Activated CD4-positive, alpha-beta T cell treated with anti-CD3 and anti-CD28 coated beads, Interleukin-2, amount 10 ng/mL, durations not matched to agents 24 days and 14 days (primary cell): ENCODE measurements at regions of chr3 and their contacts with region 1.

Region 1: GRCh38 chr3:177777699-177778098 is 580.4 kb upstream of the TBL1XR1 start:
- DNase-seq: peak; percentile 76
- H3K4me3 Mint-ChIP-seq: no peak overlapping the region
- H3K27ac Mint-ChIP-seq: no peak overlapping the region
- H3K4me1 Mint-ChIP-seq: peaks cover 10% of the 10 kb centered on the region
- H3K27me3 Mint-ChIP-seq: no peaks in the 10 kb centered on the region

Region 2: DNA sequence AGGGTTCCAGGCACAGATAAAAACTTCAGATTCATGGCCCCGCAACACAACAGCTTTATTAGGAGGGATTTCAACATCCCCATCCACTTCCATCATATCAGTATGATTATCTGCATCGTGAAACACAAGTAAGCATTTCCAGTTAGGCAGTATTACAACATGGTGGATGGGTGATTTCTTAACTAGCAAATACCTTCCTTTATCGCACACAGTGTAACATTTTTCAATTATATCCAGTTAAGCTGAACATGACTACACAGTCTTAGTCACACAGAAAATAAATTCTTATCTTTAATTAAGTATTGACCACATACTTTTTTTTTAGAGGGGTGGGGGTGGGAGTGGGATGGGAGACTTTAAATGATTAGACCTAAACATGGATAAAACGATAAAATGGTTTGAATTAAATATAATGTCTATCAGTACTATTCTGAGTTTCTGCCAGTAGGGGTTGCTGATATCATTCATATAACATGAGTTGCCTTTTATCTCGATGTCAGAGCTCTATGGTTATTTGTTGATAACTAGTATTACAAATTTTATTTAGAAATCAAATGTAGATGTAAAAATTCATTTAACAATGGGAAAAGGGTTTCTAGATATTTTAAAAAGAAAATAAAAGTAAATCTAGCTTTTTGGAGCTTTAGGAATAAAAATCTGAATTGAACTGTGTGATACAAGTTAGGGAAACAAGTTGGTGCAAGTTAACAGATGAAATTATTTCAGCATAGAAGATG is 727.0 kb before region 1 on chr3:
- intact Hi-C with region 1: loop called (anchors 5 kb)
- DNase-seq: no peak
- H3K4me3 Mint-ChIP-seq: no peak overlapping the region
- H3K27ac Mint-ChIP-seq: no peak overlapping the region
- H3K4me1 Mint-ChIP-seq: peaks cover 17% of the 10 kb centered on the region
- H3K27me3 Mint-ChIP-seq: no peaks in the 10 kb centered on the region

Region 3: DNA sequence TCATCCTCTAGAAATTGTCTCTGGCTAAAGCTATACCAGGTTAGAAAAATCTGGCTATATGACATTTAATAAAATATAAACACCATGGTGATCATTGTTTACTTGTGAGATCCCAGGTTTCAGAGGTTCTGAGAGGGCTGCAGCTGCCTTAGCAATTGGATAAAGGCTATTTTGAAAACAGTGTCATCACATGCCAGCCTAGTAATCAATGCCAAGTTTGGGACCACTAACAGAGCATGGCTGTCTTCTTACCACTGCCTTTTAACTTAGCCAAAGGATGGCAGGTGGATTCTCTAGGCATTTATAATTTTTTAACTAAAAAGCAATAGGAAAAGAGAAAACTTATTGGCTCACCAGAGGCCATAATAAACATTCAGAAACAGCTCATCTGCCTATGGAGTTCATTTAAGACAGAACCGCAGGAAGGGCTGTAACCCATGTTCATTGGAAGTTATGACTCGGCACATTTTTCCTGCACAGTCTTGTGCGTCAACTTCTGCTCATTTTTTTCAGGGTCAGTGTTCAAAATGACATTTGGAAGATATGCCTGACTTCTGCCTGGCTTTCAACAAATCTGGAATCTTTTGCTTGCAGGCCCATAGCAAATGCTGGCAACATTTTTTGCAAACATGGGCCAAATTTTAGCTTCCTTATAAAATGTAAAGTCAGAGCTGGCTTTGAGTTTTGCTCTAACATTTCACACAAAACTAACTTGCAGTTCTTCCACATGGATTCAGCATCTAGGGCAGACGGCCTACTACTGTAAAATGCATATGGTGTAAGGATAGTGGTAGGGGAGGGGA is 104.4 kb before region 1 on chr3:
- intact Hi-C with region 1: no loop called
- DNase-seq: no peak
- H3K4me3 Mint-ChIP-seq: no peak overlapping the region
- H3K27ac Mint-ChIP-seq: no peak overlapping the region
- H3K4me1 Mint-ChIP-seq: peaks cover 2% of the 10 kb centered on the region
- H3K27me3 Mint-ChIP-seq: no peaks in the 10 kb centered on the region

Region 4: GRCh38 chr3:177705976-177706823 is 71.5 kb before region 1 on chr3:
- intact Hi-C with region 1: no loop called
- DNase-seq: no peak
- H3K4me3 Mint-ChIP-seq: no peak overlapping the region
- H3K27ac Mint-ChIP-seq: no peak overlapping the region
- H3K4me1 Mint-ChIP-seq: no peaks in the 10 kb centered on the region
- H3K27me3 Mint-ChIP-seq: no peaks in the 10 kb centered on the region

Region 5: GRCh38 chr3:177753451-177754155 is 24.1 kb before region 1 on chr3:
- intact Hi-C with region 1: no loop called
- DNase-seq: no peak
- H3K4me3 Mint-ChIP-seq: no peak overlapping the region
- H3K27ac Mint-ChIP-seq: no peak overlapping the region
- H3K4me1 Mint-ChIP-seq: peaks cover 2% of the 10 kb centered on the region
- H3K27me3 Mint-ChIP-seq: no peaks in the 10 kb centered on the region

Region 6: DNA sequence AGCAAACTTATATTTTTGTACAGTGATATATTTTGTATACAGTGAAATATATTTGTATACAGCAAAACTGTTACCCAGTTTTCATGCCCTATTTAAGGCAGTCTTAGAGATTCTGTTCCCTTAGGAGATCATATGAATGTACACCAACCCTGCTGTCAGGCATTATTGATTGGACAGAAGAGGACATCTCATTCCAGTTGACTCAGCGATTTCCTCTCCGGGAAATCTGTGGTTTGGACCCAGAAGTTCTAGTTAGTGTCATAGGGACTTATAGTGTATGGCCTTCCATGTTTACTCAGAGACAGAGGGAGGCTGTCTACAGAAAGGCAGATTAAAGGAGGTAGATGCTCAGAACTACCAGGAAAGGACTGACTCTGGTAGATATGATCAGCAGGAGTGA is 439.8 kb after region 1 on chr3:
- intact Hi-C with region 1: no loop called
- DNase-seq: no peak
- H3K4me3 Mint-ChIP-seq: no peak overlapping the region
- H3K27ac Mint-ChIP-seq: no peak overlapping the region
- H3K4me1 Mint-ChIP-seq: no peaks in the 10 kb centered on the region
- H3K27me3 Mint-ChIP-seq: no peaks in the 10 kb centered on the region